ENCODE measurements at regions of chr2 and their contacts with region 1.

Region 1: DNA sequence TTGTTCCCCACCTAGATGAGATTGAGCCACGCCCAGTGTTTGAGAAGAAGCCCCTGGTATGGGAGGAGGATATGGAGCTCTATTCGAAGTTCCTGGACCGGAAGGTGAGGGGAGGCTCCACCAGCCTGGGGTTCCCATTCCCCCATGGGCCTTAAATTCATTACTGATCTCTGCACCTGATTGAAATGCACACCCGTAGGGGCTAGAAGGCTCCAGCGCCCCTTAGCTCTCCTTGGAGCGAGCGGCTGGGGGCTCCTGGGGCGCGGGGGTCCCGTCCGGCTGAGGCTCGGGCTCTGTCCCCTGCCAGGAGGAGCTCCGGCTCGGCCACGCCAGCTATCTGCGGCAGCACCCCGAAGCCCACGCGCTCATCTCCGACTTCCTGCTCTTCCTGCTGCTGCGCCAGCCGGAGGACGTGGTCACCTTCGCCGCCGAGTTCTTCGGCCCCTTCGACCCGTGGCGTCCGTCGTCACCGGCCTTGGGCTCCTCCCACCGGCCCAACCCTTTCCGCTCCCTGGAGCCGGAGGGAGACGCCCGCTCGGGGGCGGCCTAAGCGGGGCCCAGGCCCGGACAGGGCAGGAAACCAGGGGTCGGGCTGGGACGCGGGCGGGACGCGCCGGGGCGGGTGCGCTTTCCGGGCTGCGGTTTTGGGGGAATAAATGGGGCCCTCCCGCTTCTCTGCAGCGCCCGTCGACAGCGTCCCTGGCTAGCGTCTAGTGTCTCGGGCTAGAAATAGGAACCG is 10.9 kb downstream of the CATIP start:
- DNase-seq: peak; percentile 93 to 97 (median 94)
- ATAC-seq: peak; percentile 88 to 97 (median 96)
- H3K4me3 ChIP-seq: peak overlapping the region; percentile 12 to 72 (median 59)
- H3K27ac ChIP-seq: peak overlapping the region; percentile 75 to 98 (median 92)
- H3K4me1 ChIP-seq: peaks cover 0 to 48% (median 11%) of the 10 kb centered on the region in 12 donors
- H3K27me3 ChIP-seq: no peaks in the 10 kb centered on the region
- CTCF ChIP-seq: peak in 5 of 12 donors; percentile 9 to 32 (median 10)
- POLR2A ChIP-seq: peak; percentile 56 to 94

Region 2: GRCh38 chr2:218292048-218293014 is 75.3 kb before region 1 on chr2 and contains the start of gene TMBIM1:
- intact Hi-C with region 1: loop called in 1 of 10 experiments (anchors 5 kb)
- DNase-seq: peak; percentile 83 to 92 (median 87)
- ATAC-seq: peak; percentile 68 to 92 (median 86)
- H3K4me3 ChIP-seq: peak within 1 kb of the TSS; percentile 74 to 98 (median 90)
- H3K27ac ChIP-seq: peak within 1 kb of the TSS; percentile 90 to 100 (median 96)
- H3K4me1 ChIP-seq: peaks cover 2 to 71% (median 49%) of the 10 kb centered on the region in 12 donors
- H3K27me3 ChIP-seq: no peaks in the 10 kb centered on the region
- CTCF ChIP-seq: peak; percentile 63 to 99 (median 96)
- POLR2A ChIP-seq: peak; percentile 50 to 93
- total RNA-seq, gene TMBIM1: 89.1 to 173 (median 126) TPM

Region 3: DNA sequence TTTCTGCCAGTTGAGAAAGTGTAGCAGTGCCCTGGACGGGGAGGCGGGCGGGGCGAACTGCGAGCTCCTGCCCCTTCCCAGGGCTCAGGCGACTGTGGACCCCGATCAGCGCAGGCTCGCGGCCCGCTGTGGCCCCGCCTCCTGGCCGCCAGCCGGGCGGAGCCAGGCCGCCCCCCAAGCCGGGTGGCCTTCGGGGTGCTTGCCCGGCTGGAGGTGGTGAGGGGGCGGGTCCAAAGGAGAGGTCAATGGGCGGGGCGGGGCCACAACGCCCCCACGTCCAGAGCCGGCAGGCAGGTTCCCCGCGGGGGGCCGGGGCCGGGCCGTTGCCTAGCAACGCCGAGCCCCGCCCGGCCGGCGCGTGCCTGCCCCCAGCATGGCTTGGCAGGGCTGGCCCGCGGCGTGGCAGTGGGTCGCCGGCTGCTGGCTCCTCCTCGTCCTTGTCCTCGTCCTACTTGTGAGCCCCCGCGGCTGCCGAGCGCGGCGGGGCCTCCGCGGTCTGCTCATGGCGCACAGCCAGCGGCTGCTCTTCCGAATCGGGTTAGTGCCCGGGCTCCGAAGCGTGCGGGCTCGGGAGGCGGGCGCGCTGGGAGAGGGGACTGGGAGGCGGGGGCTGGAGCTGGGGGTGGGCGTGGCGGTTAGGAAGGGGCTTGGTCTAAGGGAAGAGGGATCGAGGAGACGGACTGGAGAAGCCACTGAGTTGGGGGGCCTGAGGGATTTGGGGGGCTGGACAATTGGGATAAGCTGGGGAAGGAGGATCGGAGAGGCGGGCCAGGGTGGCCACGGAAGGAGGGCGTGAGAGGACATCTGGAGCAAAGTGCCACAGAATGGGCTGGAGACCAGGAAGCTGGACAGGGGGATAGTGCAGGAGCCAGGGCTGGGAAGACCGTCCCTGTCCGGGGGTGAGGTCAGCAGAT is 44.4 kb before region 1 on chr2:
- intact Hi-C with region 1: loop called in 1 of 10 experiments (anchors 5 kb)
- DNase-seq: peak; percentile 75 to 88 (median 77)
- ATAC-seq: peak; percentile 52 to 91 (median 82)
- H3K4me3 ChIP-seq: peak overlapping the region; percentile 62 to 89 (median 84)
- H3K27ac ChIP-seq: peak overlapping the region in 11 of 12 donors; percentile 64 to 88 (median 81)
- H3K4me1 ChIP-seq: peaks cover 3 to 72% (median 21%) of the 10 kb centered on the region in 12 donors
- H3K27me3 ChIP-seq: no peaks in the 10 kb centered on the region
- CTCF ChIP-seq: no peak
- POLR2A ChIP-seq: peak in 1 of 2 donors; percentile 55

Region 4: GRCh38 chr2:218582076-218582475 is 214.5 kb after region 1 on chr2:
- intact Hi-C with region 1: no loop called
- DNase-seq: no peak
- ATAC-seq: no peak
- H3K4me3 ChIP-seq: no peak overlapping the region
- H3K27ac ChIP-seq: no peak overlapping the region
- H3K4me1 ChIP-seq: peaks cover 0 to 22% (median 7%) of the 10 kb centered on the region in 12 donors
- H3K27me3 ChIP-seq: no peaks in the 10 kb centered on the region
- CTCF ChIP-seq: no peak
- POLR2A ChIP-seq: no peak